CD8-positive, alpha-beta T cell (primary cell): ENCODE measurements at regions of chr2 and their contacts with region 1.

Region 1: GRCh38 chr2:181312515-181312927 is 144.7 kb upstream of the ITGA4 start:
- DNase-seq: peak in 5 of 9 experiments; percentile 18 to 74 (median 20)
- ATAC-seq: peak; percentile 51
- H3K4me3 ChIP-seq: no peak overlapping the region
- H3K4me3 Mint-ChIP-seq: peak overlapping the region; percentile 77
- H3K27ac ChIP-seq: peak overlapping the region; percentile 28 to 79
- H3K27ac Mint-ChIP-seq: peak overlapping the region; percentile 96
- H3K4me1 ChIP-seq: peaks cover 70% of the 10 kb centered on the region
- H3K4me1 Mint-ChIP-seq: peaks cover 59% of the 10 kb centered on the region
- H3K27me3 ChIP-seq: no peaks in the 10 kb centered on the region
- H3K27me3 Mint-ChIP-seq: no peaks in the 10 kb centered on the region
- CTCF ChIP-seq: no peak

Region 2: GRCh38 chr2:181275643-181276070 is 36.9 kb before region 1 on chr2:
- CTCF ChIA-PET with region 1: interaction called, 10 read pairs
- POLR2A ChIA-PET with region 1: interaction called, 4 read pairs
- intact Hi-C with region 1: loop called (anchors 2 to 5 kb)
- DNase-seq: peak in 5 of 9 experiments; percentile 18 to 78 (median 59)
- ATAC-seq: peak; percentile 90
- H3K4me3 ChIP-seq: no peak overlapping the region
- H3K4me3 Mint-ChIP-seq: peak overlapping the region; percentile 35
- H3K27ac ChIP-seq: peak overlapping the region; percentile 17 to 68
- H3K27ac Mint-ChIP-seq: peak overlapping the region; percentile 79
- H3K4me1 ChIP-seq: peaks cover 31% of the 10 kb centered on the region
- H3K4me1 Mint-ChIP-seq: peaks cover 46% of the 10 kb centered on the region
- H3K27me3 ChIP-seq: no peaks in the 10 kb centered on the region
- H3K27me3 Mint-ChIP-seq: no peaks in the 10 kb centered on the region
- CTCF ChIP-seq: no peak

Region 3: GRCh38 chr2:181281206-181281832 is 31.2 kb before region 1 on chr2:
- CTCF ChIA-PET with region 1: interaction called, 10 read pairs
- POLR2A ChIA-PET with region 1: interaction called, 4 read pairs
- intact Hi-C with region 1: loop called (anchors 2 to 5 kb)
- DNase-seq: peak in 2 of 9 experiments; percentile 67 to 83
- ATAC-seq: peak; percentile 89
- H3K4me3 ChIP-seq: no peak overlapping the region
- H3K4me3 Mint-ChIP-seq: peak overlapping the region; percentile 6
- H3K27ac ChIP-seq: peak overlapping the region in 1 of 2 experiments; percentile 39
- H3K27ac Mint-ChIP-seq: peak overlapping the region; percentile 86
- H3K4me1 ChIP-seq: peaks cover 29% of the 10 kb centered on the region
- H3K4me1 Mint-ChIP-seq: peaks cover 54% of the 10 kb centered on the region
- H3K27me3 ChIP-seq: no peaks in the 10 kb centered on the region
- H3K27me3 Mint-ChIP-seq: no peaks in the 10 kb centered on the region
- CTCF ChIP-seq: no peak

Region 4: DNA sequence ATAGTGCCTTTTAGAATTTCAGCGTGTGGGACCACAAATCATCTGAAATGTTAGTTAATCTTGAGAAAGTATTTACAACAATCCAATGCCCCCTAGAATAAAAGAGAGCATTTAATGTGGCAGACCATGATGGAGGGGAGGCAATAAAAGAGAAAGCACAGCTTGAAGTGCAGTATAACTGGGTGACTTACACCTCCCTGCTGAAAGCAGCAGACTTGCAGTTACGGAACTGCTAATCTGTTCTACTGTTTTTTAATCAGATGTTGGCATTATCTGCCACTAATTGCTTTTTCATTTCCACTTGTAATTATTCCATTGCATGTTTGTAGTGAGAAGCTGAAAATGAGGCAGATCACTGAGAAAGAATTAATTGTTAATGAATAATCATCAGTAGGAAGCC is 14.1 kb after region 1 on chr2:
- CTCF ChIA-PET with region 1: interaction called, 7 read pairs
- POLR2A ChIA-PET with region 1: interaction called, 6 read pairs
- intact Hi-C with region 1: loop called in 1 of 2 experiments (anchors 2 kb)
- DNase-seq: peak in 1 of 9 experiments; percentile 29
- ATAC-seq: no peak
- H3K4me3 ChIP-seq: no peak overlapping the region
- H3K4me3 Mint-ChIP-seq: no peak overlapping the region
- H3K27ac ChIP-seq: no peak overlapping the region
- H3K27ac Mint-ChIP-seq: no peak overlapping the region
- H3K4me1 ChIP-seq: peaks cover 4% of the 10 kb centered on the region
- H3K4me1 Mint-ChIP-seq: peaks cover 16% of the 10 kb centered on the region
- H3K27me3 ChIP-seq: no peaks in the 10 kb centered on the region
- H3K27me3 Mint-ChIP-seq: no peaks in the 10 kb centered on the region
- CTCF ChIP-seq: no peak

Region 5: DNA sequence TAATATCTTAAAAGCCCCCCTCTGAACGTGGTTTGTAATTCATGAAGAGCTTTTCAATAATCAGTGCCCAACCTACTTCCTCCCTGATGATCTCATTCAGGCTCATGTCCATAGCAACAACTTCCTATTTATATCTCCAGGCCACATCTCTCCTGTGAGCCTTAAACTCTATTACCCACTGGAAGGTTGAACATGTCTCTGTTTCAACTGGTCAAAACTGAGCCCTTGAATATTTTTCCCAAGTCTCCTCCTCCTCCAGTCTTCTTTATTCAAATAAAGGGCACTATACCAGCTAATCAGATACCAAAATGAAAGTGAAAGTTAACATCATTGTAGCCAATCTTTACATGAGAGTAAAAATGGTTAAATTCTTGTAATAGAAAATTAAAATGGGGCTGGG is 81.0 kb after region 1 on chr2:
- CTCF ChIA-PET with region 1: no interaction called
- POLR2A ChIA-PET with region 1: interaction called, 3 read pairs
- intact Hi-C with region 1: loop called in 1 of 2 experiments (anchors 5 kb)
- DNase-seq: peak in 2 of 9 experiments; percentile 62 to 80
- ATAC-seq: peak; percentile 58
- H3K4me3 ChIP-seq: peak overlapping the region; percentile 13 to 55
- H3K4me3 Mint-ChIP-seq: peak overlapping the region; percentile 76
- H3K27ac ChIP-seq: peak overlapping the region; percentile 38 to 97
- H3K27ac Mint-ChIP-seq: peak overlapping the region; percentile 87
- H3K4me1 ChIP-seq: peaks cover 17% of the 10 kb centered on the region
- H3K4me1 Mint-ChIP-seq: peaks cover 30% of the 10 kb centered on the region
- H3K27me3 ChIP-seq: no peaks in the 10 kb centered on the region
- H3K27me3 Mint-ChIP-seq: no peaks in the 10 kb centered on the region
- CTCF ChIP-seq: no peak